ENCODE measurements at regions of chrX and their contacts with region 1.

Region 1: DNA sequence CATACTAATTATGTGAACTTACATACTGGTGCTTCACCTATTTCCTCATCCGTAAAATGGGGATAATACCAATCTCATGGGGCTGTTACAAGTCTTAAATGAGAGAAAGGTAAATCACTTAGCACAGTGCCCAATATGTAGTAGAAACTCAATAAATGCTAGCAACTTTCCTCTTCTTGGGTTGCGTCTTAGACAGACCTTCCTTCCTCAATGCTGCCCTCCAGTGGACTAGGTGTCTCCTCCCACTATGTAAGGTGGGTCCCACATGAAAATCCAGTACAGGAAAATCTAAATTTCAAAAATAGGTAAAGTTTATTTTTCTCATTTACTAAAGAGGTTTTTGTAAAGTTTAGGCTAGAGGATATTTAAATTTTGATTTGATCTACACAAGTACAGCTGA is 20.6 kb downstream of the ZDHHC9 start:
- DNase-seq: peak; percentile 36 to 58
- ATAC-seq: peak; percentile 73 to 88; a peak in 5 of 6 replicates
- H3K4me3 ChIP-seq: no peak overlapping the region
- H3K27ac ChIP-seq: no peak overlapping the region
- H3K4me1 ChIP-seq: no peaks in the 10 kb centered on the region
- CTCF ChIP-seq: peak; percentile 58
- EP300 ChIP-seq: no peak
- POLR2A ChIP-seq: no peak
- RAD21 ChIP-seq: peak; percentile 43 to 60; a peak in 3 of 5 replicates

Region 2: GRCh38 chrX:129606918-129607317 is 216.2 kb before region 1 on chrX:
- CTCF ChIA-PET with region 1: interaction called, 14 read pairs
- POLR2A ChIA-PET with region 1: no interaction called
- DNase-seq: peak; percentile 47 to 62
- ATAC-seq: peak; percentile 59 to 69; a peak in 4 of 6 replicates
- H3K4me3 ChIP-seq: no peak overlapping the region
- H3K27ac ChIP-seq: no peak overlapping the region
- H3K4me1 ChIP-seq: peaks cover 4% of the 10 kb centered on the region; the same call in 1 of the 3 replicates
- CTCF ChIP-seq: peak; percentile 72
- EP300 ChIP-seq: no peak
- POLR2A ChIP-seq: no peak
- RAD21 ChIP-seq: peak; percentile 83 to 87

Region 3: GRCh38 chrX:129836827-129837226 is 13.7 kb after region 1 on chrX:
- CTCF ChIA-PET with region 1: interaction called, 11 read pairs
- POLR2A ChIA-PET with region 1: no interaction called
- DNase-seq: no peak
- ATAC-seq: no peak
- H3K4me3 ChIP-seq: no peak overlapping the region
- H3K27ac ChIP-seq: no peak overlapping the region
- H3K4me1 ChIP-seq: no peaks in the 10 kb centered on the region; the same call in 2 of the 3 replicates
- CTCF ChIP-seq: no peak
- EP300 ChIP-seq: no peak
- POLR2A ChIP-seq: no peak
- RAD21 ChIP-seq: no peak